ENCODE measurements at regions of chr22 and their contacts with region 1.

Region 1: GRCh38 chr22:17920145-17920605 is 104.2 kb downstream of the MICAL3 start:
- DNase-seq: peak; percentile 57 to 86
- H3K4me3 ChIP-seq: peak overlapping the region in 3 of 4 donors; percentile 8 to 17 (median 12)
- H3K27ac ChIP-seq: peak overlapping the region in 4 of 5 donors; percentile 30 to 54 (median 49)
- H3K4me1 ChIP-seq: peaks cover 40 to 69% (median 56%) of the 10 kb centered on the region in 4 donors
- H3K27me3 ChIP-seq: no peaks in the 10 kb centered on the region
- CTCF ChIP-seq: peak in 1 of 7 experiments; percentile 16
- EP300 ChIP-seq: no peak
- POLR2A ChIP-seq: no peak

Region 2: GRCh38 chr22:17807578-17808360 is 112.4 kb before region 1 on chr22:
- intact Hi-C with region 1: no loop called
- DNase-seq: peak in 1 of 2 donors; percentile 32
- H3K4me3 ChIP-seq: no peak overlapping the region
- H3K27ac ChIP-seq: peak overlapping the region in 1 of 5 donors; percentile 26
- H3K4me1 ChIP-seq: peaks cover 3 to 23% (median 7%) of the 10 kb centered on the region in 4 donors
- H3K27me3 ChIP-seq: no peaks in the 10 kb centered on the region
- CTCF ChIP-seq: no peak
- EP300 ChIP-seq: no peak
- POLR2A ChIP-seq: no peak

Region 3: DNA sequence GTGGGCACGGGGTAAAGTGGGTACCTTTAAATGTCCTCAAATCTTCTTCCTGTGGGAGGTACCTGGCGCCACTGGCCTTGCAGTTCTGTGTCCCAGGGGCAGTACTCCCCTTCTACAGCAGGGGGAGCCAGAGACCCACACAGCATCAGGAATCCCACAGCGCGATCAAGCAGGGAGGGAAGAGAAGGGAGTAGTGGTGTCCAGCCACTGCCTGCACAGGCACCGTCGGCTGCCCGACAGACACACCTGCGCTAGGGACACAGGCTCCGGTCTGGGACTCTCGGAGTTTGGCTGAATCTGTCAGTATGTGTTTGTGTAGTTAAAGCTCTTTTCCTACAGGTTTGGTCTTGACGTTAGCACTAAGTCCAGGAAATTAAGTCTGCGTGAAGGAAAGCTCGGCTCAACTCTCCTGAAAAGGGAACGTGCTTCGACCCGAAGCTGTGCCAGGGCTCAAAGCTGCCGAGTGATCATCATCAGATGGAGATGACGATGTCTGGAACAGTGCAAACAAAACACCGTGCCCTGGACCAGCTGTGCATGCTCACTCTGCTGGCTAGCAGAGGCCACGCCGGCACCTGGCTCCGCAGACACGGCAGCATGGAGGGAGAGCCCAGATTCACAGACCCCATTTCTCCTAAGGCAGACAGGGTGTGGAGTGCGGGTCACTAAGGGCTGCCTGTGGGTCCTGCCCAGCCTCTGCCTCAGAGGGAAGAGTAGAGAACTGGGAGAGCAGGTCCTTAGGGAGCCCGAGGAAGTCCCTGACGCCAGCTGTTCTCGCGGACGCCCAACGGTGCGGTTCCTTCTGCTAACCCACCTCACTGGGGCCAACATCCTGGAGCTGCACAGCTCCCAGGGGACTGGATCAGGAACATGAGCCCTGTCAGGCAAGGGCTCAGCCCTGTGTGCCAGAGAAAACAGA is 89.9 kb before region 1 on chr22:
- intact Hi-C with region 1: no loop called
- DNase-seq: peak; percentile 91 to 95
- H3K4me3 ChIP-seq: no peak overlapping the region
- H3K27ac ChIP-seq: peak overlapping the region in 4 of 5 donors; percentile 47 to 84 (median 62)
- H3K4me1 ChIP-seq: peaks cover 11 to 40% (median 24%) of the 10 kb centered on the region in 4 donors
- H3K27me3 ChIP-seq: no peaks in the 10 kb centered on the region
- CTCF ChIP-seq: peak in 6 of 7 experiments; percentile 46 to 99 (median 99)
- EP300 ChIP-seq: peak; percentile 10
- POLR2A ChIP-seq: no peak

Region 4: DNA sequence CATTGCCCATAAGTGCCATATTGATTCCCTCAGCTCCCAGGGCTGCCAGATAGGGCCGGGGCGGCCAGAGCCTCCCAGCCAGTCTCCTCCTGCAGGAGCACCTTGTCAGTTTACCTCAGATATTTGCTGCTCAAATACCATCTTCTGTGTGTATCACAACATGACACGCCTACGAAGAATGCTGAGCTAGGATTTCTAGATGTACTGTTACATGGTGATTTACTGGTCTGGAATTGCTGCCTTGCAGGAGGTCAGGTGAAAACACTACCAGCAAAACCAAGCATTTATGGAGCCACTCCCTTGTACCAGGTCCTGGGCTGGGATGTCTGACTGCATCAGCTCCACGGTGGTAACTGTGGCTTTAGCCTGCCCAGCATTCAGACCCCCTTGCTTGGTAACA is 92.4 kb after region 1 on chr22:
- intact Hi-C with region 1: loop called (anchors 10 kb)
- DNase-seq: no peak
- H3K4me3 ChIP-seq: no peak overlapping the region
- H3K27ac ChIP-seq: no peak overlapping the region
- H3K4me1 ChIP-seq: no peaks in the 10 kb centered on the region
- H3K27me3 ChIP-seq: no peaks in the 10 kb centered on the region
- CTCF ChIP-seq: no peak
- EP300 ChIP-seq: no peak
- POLR2A ChIP-seq: no peak